Prostate gland (tissue), 2 donors: ENCODE measurements at regions of chr13 and their contacts with region 1.

Region 1: GRCh38 chr13:50357586-50358118 is 342.4 kb downstream of the KCNRG start:
- DNase-seq: peak; percentile 88
- H3K4me3 ChIP-seq: no peak overlapping the region
- H3K27ac ChIP-seq: peak overlapping the region; percentile 74 to 83
- H3K4me1 ChIP-seq: peaks cover 8% of the 10 kb centered on the region
- H3K27me3 ChIP-seq: no peaks in the 10 kb centered on the region
- CTCF ChIP-seq: no peak
- POLR2A ChIP-seq: peak; percentile 10

Region 2: DNA sequence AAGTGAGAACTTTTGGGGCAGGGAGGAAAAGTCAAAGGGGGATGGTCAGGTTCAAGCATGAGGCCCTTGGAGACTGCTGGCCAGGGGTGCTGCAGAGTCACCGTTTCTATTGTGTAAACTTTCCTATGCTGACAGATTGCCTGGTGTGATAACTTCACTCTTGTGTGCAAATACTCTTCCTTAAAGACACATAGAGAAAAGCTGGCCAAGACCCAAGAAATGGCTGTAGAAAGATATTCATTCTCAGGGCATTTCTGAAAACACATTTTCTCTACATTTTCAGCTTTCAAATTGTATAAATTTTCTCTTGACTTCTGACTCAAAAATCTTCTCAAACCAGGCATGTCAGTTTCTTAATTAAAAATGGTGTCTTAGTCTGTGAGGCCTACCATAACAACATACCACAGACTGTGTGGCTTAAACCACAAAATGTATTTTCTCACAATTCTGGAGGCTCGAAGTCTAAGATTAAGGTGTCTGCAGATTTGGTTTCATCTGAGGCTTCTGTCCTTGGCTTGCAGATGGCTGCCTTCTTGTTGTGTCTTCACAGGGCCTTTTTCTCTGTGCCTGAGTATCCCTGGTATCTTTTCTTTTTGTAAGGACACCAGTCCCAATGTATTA is 37.9 kb before region 1 on chr13:
- intact Hi-C with region 1: no loop called
- DNase-seq: peak; percentile 66
- H3K4me3 ChIP-seq: no peak overlapping the region
- H3K27ac ChIP-seq: no peak overlapping the region
- H3K4me1 ChIP-seq: no peaks in the 10 kb centered on the region
- H3K27me3 ChIP-seq: no peaks in the 10 kb centered on the region
- CTCF ChIP-seq: no peak
- POLR2A ChIP-seq: no peak

Region 3: GRCh38 chr13:50512474-50513299 is 155.0 kb after region 1 on chr13:
- intact Hi-C with region 1: loop called (anchors 10 kb)
- DNase-seq: peak; percentile 38
- H3K4me3 ChIP-seq: peak overlapping the region in 1 of 2 donors; percentile 2
- H3K27ac ChIP-seq: peak overlapping the region; percentile 35 to 57
- H3K4me1 ChIP-seq: no peaks in the 10 kb centered on the region
- H3K27me3 ChIP-seq: no peaks in the 10 kb centered on the region
- CTCF ChIP-seq: peak in 1 of 4 experiments; percentile 2
- POLR2A ChIP-seq: no peak